ENCODE measurements at regions of chr5 and their contacts with region 1.

Region 1: GRCh38 chr5:161420521-161420920 is 126.0 kb downstream of the GABRB2 start:
- DNase-seq: no peak
- H3K4me3 Mint-ChIP-seq: no peak overlapping the region
- H3K27ac Mint-ChIP-seq: no peak overlapping the region
- H3K4me1 Mint-ChIP-seq: no peaks in the 10 kb centered on the region
- H3K27me3 Mint-ChIP-seq: peaks cover 35% of the 10 kb centered on the region
- CTCF ChIP-seq: no peak

Region 2: GRCh38 chr5:161385027-161385426 is 35.5 kb before region 1 on chr5:
- CTCF ChIA-PET with region 1: no interaction called
- POLR2A ChIA-PET with region 1: no interaction called
- intact Hi-C with region 1: no loop called
- DNase-seq: no peak
- H3K4me3 Mint-ChIP-seq: no peak overlapping the region
- H3K27ac Mint-ChIP-seq: no peak overlapping the region
- H3K4me1 Mint-ChIP-seq: no peaks in the 10 kb centered on the region
- H3K27me3 Mint-ChIP-seq: peaks cover 42% of the 10 kb centered on the region
- CTCF ChIP-seq: no peak

Region 3: DNA sequence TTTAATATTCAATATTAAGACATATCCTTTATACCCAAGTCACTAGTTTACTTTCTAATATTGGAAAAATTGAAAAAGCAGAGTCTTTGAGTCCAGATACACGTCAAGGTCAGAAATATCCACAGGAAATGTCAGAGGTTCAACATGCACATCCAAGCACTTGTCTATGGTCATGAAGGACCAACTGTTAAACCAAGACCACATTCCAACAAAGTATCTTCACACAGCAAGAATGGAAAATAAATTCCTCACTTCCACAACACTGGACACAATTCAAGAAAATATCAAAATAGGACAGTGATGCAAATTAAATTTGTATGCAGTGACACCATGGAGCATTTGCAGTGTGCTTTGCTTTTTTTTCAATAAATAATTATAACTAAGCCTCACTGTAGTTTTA is 16.5 kb before region 1 on chr5:
- CTCF ChIA-PET with region 1: no interaction called
- POLR2A ChIA-PET with region 1: no interaction called
- intact Hi-C with region 1: loop called (anchors 2 kb)
- DNase-seq: no peak
- H3K4me3 Mint-ChIP-seq: no peak overlapping the region
- H3K27ac Mint-ChIP-seq: no peak overlapping the region
- H3K4me1 Mint-ChIP-seq: no peaks in the 10 kb centered on the region
- H3K27me3 Mint-ChIP-seq: peaks cover 53% of the 10 kb centered on the region
- CTCF ChIP-seq: no peak